ENCODE measurements at regions of chr2 and their contacts with region 1.

Region 1: DNA sequence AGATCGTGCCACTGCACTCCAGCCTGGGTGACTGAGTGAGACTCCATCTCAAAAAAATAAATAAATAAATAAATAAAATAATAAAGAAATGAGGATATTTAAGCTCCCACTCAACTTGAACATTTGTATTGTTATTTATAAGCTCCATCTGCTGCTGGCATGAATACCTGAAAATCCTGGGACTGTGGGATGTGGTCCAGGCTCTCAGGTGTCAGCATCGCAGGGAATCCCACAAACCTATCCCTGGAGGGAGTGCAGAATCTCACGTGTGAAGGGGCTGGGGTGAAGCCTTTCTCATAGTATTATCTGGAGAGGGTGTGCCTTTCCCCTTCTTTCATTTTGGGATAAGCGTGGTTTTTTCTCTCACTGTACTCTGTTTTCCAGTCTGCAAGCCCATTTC is 47.4 kb upstream of the POLE4 start:
- DNase-seq: no peak
- H3K4me3 ChIP-seq: no peak overlapping the region
- H3K27ac ChIP-seq: no peak overlapping the region
- H3K4me1 ChIP-seq: no peaks in the 10 kb centered on the region
- H3K27me3 ChIP-seq: no peaks in the 10 kb centered on the region
- CTCF ChIP-seq: no peak
- POLR2A ChIP-seq: no peak

Region 2: GRCh38 chr2:75025623-75026380 is 114.7 kb after region 1 on chr2:
- intact Hi-C with region 1: no loop called
- DNase-seq: no peak
- H3K4me3 ChIP-seq: no peak overlapping the region
- H3K27ac ChIP-seq: no peak overlapping the region
- H3K4me1 ChIP-seq: no peaks in the 10 kb centered on the region
- H3K27me3 ChIP-seq: no peaks in the 10 kb centered on the region
- CTCF ChIP-seq: no peak
- POLR2A ChIP-seq: no peak

Region 3: DNA sequence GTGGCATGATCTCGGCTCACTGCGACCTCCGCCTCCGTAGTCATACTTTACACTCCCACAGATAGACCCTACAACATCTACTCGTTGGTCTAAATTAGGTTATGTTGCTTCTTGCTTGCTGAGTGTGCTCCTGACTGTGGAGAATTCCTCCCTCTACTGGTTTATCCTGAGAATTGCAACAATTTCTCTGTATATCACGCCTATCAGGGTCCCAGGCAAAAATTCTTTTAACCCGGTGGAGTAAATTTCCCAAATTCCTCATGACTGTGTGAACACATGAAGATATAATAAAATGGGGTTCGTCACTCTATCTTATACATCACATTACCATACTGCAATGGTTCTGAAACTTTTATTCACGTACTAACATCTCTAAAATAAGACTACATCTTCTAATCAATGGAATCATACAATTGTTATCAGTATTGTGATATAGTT is 492.9 kb after region 1 on chr2:
- intact Hi-C with region 1: loop called (anchors 5 kb)
- DNase-seq: no peak
- H3K4me3 ChIP-seq: no peak overlapping the region
- H3K27ac ChIP-seq: no peak overlapping the region
- H3K4me1 ChIP-seq: no peaks in the 10 kb centered on the region
- H3K27me3 ChIP-seq: no peaks in the 10 kb centered on the region
- CTCF ChIP-seq: peak; percentile 29 to 68 (median 66)
- POLR2A ChIP-seq: no peak